A549 (cell line): ENCODE measurements at regions of chr7 and their contacts with region 1.

Region 1: DNA sequence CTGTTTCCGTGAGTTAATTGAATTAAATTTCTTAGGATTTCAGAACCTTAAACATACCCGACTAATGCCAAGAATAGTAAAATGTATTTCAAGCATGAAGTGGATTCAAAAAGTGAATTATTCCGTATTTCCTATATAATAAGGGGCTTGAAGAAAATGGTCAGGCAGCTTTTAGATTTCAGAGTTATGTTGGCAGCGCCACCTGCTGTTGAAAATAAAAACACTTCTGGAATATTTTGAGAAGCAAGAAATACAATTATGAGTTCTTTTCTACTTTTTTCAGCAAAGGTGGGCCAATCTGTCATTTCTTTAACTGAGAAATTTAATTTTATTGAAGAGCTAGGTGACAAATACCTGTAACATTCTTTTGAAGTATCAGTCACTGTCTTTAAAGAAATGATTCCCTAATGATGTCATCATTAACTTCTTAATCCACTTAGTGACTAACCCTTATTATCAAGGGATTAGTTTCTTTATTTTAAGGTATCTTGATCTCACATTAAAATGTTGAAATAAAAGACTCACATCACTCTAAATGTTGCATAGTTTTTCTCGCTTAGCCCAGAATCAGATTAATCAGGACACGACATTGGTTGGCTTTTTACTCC is 36.6 kb upstream of the AGR3 start:
- DNase-seq: peak in 1 of 2 experiments; percentile 68
- ATAC-seq: no peak
- H3K4me3 ChIP-seq: no peak overlapping the region
- H3K27ac ChIP-seq: peak overlapping the region; percentile 43 to 63; a peak in 4 of 6 replicates
- H3K4me1 ChIP-seq: peaks cover 57% of the 10 kb centered on the region
- CTCF ChIP-seq: peak; percentile 92
- EP300 ChIP-seq: no peak
- POLR2A ChIP-seq: no peak
- RAD21 ChIP-seq: peak; percentile 82 to 89

Region 2: DNA sequence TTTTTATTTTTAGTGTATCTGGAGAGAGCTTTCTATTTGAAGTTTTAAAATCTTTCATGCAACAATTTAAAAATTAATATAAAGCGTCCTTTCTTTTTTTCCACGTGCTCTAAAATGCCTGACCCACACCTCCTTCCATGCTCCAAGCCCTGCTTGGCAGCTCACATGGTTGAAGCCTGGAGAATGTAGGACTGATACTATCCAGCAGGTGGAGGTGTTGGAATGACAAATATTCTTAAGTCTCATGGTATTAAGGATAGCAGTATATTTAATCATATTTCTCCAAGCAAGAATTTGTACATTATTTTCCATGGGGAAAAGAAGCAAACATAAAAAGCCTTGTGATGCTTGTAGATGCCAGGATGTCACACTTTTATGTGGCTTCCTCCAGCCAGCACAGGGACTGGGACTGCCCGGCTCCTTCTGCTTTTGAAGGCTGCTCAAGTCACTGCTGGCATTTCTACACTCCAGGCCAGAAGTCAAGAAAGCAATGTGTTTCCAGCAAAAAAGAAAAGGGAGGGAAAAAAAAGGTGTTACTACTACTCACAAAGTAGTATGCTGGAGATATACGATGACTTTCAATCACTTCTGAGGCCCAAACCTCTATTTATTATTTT is 222.7 kb before region 1 on chr7:
- CTCF ChIA-PET with region 1: interaction called, 20 read pairs
- POLR2A ChIA-PET with region 1: no interaction called
- DNase-seq: peak; percentile 67 to 80
- ATAC-seq: peak; percentile 91 to 94
- H3K4me3 ChIP-seq: no peak overlapping the region
- H3K27ac ChIP-seq: no peak overlapping the region
- H3K4me1 ChIP-seq: no peaks in the 10 kb centered on the region
- CTCF ChIP-seq: peak; percentile 76
- EP300 ChIP-seq: no peak
- POLR2A ChIP-seq: no peak
- RAD21 ChIP-seq: peak; percentile 78 to 80

Region 3: DNA sequence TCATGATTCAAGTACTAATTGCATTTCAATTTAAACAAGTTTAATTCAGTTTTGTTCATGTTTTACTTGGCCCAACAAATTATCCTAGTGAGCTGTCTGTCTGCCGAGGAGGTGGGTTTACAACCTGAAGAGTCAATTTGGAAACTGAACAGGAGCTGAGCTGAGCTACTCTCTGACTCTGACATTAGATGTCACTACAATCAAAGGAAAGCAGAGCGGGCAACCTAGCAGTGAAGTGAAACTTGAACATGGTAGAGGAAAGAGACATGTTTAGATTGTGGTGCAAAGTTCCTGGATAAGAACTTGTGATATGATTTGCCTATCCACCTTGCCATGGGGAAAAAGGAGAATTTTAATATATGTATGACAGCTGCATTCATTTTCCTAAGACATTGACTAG is 27.1 kb before region 1 on chr7:
- CTCF ChIA-PET with region 1: interaction called, 27 read pairs
- POLR2A ChIA-PET with region 1: no interaction called
- DNase-seq: peak; percentile 12 to 78
- ATAC-seq: peak; percentile 97 to 98
- H3K4me3 ChIP-seq: no peak overlapping the region
- H3K27ac ChIP-seq: peak overlapping the region; percentile 15 to 35; a peak in 2 of 6 replicates
- H3K4me1 ChIP-seq: peaks cover 21% of the 10 kb centered on the region; the same call in 2 of the 3 replicates
- CTCF ChIP-seq: peak; percentile 77
- EP300 ChIP-seq: no peak
- POLR2A ChIP-seq: no peak
- RAD21 ChIP-seq: peak; percentile 96 to 97

Region 4: DNA sequence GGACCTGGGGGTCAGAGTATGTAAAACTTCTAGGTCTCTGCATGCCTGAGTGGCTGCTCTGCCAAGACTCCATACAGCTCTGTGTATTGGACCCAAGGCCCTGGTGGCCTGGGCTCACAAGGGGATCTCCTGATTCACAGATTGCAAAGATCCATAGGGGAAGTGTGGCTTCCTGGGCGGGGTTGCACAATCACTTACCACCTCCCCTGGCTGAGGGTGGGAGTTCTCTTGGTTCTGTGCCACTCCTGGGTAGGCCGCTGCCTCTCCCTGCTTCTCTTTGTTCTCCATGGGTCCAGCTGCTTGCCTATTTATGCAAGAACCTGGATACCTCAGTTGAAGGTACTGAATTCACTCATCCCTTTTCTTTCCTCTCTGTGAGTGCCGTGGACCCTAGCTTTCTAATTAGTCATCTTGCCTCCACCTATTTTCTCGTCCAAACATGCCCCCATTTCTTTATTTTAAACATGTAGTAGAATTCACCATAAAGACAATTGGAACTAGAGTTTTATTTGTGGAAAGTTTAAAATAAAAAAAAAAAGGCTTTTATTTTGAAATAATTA is 18.1 kb before region 1 on chr7:
- CTCF ChIA-PET with region 1: interaction called, 12 read pairs
- POLR2A ChIA-PET with region 1: no interaction called
- DNase-seq: no peak
- ATAC-seq: no peak
- H3K4me3 ChIP-seq: no peak overlapping the region
- H3K27ac ChIP-seq: no peak overlapping the region
- H3K4me1 ChIP-seq: peaks cover 14% of the 10 kb centered on the region
- CTCF ChIP-seq: no peak
- EP300 ChIP-seq: no peak
- POLR2A ChIP-seq: no peak
- RAD21 ChIP-seq: no peak

Region 5: DNA sequence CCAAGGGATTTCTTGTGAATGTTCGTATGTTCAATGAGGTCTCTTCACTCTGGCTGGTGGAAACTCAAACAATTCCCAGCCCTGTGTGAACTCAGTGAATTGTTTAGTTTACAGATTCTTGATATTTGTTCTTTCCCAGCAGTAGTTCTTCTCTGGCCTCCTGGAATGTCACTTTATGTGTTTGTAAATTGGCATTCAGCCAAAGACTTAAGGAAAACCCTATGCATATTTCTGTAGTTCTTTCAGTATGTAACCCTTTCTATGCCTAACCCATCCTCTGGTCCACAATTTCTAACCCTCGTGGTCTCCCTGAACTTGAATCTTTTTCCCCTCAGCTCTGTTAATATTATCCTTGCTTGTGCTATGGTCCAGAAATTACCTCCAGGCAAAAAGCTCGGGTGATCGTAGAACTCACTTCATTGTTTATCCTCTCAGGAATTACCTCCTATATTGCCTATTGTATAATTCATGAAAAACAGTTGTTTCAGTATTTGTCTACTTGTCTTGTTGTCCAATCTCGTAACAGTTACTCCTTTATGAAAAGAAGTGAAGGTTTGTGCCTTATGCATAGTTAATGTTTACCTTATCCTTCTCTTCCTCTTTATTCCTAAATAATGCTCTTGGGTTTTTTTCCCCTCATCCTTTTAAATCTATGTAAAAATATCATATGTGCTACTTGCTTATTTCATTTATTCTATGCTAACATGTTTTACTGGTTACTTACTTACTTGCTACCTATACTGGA is 12.9 kb before region 1 on chr7:
- CTCF ChIA-PET with region 1: interaction called, 18 read pairs
- POLR2A ChIA-PET with region 1: no interaction called
- DNase-seq: peak in 1 of 2 experiments; percentile 93
- ATAC-seq: peak; percentile 66 to 99; a peak in 4 of 6 replicates
- H3K4me3 ChIP-seq: no peak overlapping the region
- H3K27ac ChIP-seq: peak overlapping the region; percentile 64 to 71
- H3K4me1 ChIP-seq: peaks cover 25% of the 10 kb centered on the region
- CTCF ChIP-seq: no peak
- EP300 ChIP-seq: peak; percentile 35 to 62; a peak in 3 of 5 replicates
- POLR2A ChIP-seq: no peak
- RAD21 ChIP-seq: no peak; a peak in 1 of 5 replicates

Region 6: GRCh38 chr7:17130281-17131059 is 212.1 kb after region 1 on chr7:
- CTCF ChIA-PET with region 1: no interaction called
- POLR2A ChIA-PET with region 1: no interaction called
- DNase-seq: peak; percentile 84 to 95
- ATAC-seq: peak; percentile 95 to 96
- H3K4me3 ChIP-seq: peak overlapping the region; percentile 20; the same call in 2 of the 3 replicates
- H3K27ac ChIP-seq: peak overlapping the region; percentile 71 to 79
- H3K4me1 ChIP-seq: peaks cover 31% of the 10 kb centered on the region
- CTCF ChIP-seq: no peak
- EP300 ChIP-seq: peak; percentile 79 to 95; a peak in 4 of 5 replicates
- POLR2A ChIP-seq: no peak
- RAD21 ChIP-seq: peak; percentile 17 to 63; a peak in 4 of 5 replicates